Brain microvascular endothelial cell (primary cell): ENCODE measurements at regions of chr1 and their contacts with region 1.

Region 1: GRCh38 chr1:192808518-192809306 is at the start of gene RGS2:
- DNase-seq: peak; percentile 85
- H3K4me3 ChIP-seq: peak within 1 kb of the TSS; percentile 91
- H3K27ac ChIP-seq: peak within 1 kb of the TSS; percentile 82
- H3K27me3 ChIP-seq: no peaks in the 10 kb centered on the region
- CTCF ChIP-seq: no peak

Region 2: DNA sequence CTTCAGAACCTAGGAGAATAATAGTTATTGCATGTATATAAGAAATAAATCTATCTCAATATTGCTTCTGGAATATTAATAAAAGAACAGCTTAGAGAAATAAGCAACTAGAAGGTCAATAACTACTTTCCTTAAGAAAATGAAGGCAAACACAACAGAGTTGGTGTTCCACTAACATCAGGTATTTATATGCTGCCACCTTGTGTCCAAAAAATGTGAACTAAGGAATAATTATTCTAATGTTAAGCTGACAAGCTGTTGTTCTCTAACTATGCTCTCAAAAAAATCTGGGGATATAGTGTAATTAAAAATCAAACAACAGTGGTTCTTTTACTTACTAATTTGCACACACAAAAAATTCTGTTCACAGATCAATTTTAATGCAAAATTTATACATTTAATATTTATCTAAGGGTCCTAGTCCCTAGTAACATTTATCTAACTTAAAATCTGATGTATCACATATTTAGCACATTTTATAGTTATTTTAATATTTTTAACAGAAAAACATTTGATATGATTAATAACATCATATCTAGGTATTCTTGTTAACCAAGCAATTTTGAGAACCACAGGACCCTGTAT is 210.8 kb after region 1 on chr1:
- in situ Hi-C with region 1: loop called (anchors 25 kb)
- DNase-seq: peak; percentile 6
- H3K4me3 ChIP-seq: no peak overlapping the region
- H3K27ac ChIP-seq: no peak overlapping the region
- H3K27me3 ChIP-seq: no peaks in the 10 kb centered on the region
- CTCF ChIP-seq: peak; percentile 18